CD14-positive monocyte (primary cell): ENCODE measurements at regions of chr15 and their contacts with region 1.

Region 1: DNA sequence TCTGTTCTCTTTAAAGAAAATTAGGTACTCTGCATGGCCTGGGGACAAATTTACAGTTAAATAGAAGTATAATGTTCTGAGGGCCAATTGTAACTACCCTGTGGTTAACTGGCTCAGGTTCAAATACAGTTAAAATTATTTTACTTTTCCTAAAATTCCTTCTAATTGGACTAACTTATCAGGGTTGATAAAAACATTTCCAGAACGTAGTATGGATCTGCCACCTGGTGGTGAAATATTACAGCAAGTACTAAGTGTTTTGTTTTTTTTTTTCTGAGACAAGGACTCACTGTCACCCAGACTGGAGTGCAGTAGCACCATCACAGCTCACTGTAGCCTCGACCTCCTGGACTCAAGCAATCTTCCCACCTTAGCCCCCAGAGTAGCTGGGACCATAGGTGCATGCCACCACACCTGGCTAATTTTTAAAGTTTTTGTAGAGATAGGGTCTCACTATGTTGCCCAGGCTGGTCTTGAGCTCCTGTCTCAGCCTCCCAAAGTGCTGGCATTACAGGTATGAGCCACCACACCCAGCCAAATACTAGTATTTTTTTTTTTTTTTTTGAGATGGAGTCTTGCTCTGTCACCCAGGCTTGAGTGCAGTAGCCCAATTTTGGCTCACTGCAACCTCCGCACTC is 29.2 kb downstream of the NEO1 start:
- DNase-seq: peak in 2 of 3 donors; percentile 5 to 28
- H3K4me3 ChIP-seq: no peak overlapping the region
- H3K4me3 Mint-ChIP-seq: no peak overlapping the region
- H3K27ac ChIP-seq: no peak overlapping the region
- H3K27ac Mint-ChIP-seq: no peak overlapping the region
- H3K4me1 ChIP-seq: no peaks in the 10 kb centered on the region
- H3K4me1 Mint-ChIP-seq: no peaks in the 10 kb centered on the region
- H3K27me3 ChIP-seq: peaks cover 6 to 11% of the 10 kb centered on the region in 2 donors
- H3K27me3 Mint-ChIP-seq: peaks cover 11 to 18% (median 12%) of the 10 kb centered on the region in 3 donors
- CTCF ChIP-seq: peak; percentile 46

Region 2: DNA sequence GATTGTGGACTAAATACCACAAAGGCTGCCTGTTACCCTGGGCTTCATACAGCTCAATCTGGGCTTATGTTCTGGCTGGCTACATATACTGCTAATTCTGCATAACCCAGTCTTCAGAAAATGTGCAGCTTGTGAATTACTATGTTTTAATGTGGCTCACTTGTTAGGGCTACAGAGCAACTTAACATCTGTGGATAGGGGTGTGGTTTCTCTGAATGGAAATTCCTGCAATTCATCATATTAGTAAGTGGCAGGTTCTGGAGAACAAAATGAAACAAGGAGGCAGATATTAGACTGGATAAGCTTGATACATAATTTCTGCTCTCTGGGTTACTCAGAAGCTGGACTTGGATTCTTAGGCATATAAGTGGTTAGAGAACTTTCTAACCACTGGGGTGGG is 676.6 kb before region 1 on chr15:
- intact Hi-C with region 1: no loop called
- DNase-seq: no peak
- H3K4me3 ChIP-seq: no peak overlapping the region
- H3K4me3 Mint-ChIP-seq: no peak overlapping the region
- H3K27ac ChIP-seq: no peak overlapping the region
- H3K27ac Mint-ChIP-seq: no peak overlapping the region
- H3K4me1 ChIP-seq: no peaks in the 10 kb centered on the region
- H3K4me1 Mint-ChIP-seq: peaks cover 6% of the 10 kb centered on the region
- H3K27me3 ChIP-seq: peaks cover 2 to 3% of the 10 kb centered on the region in 2 donors
- H3K27me3 Mint-ChIP-seq: peaks cover 6 to 15% (median 9%) of the 10 kb centered on the region in 3 donors
- CTCF ChIP-seq: no peak

Region 3: GRCh38 chr15:72722071-72722696 is 359.3 kb before region 1 on chr15:
- intact Hi-C with region 1: loop called in 1 of 2 experiments (anchors 10 kb)
- DNase-seq: peak; percentile 47 to 62 (median 56)
- H3K4me3 ChIP-seq: no peak overlapping the region
- H3K4me3 Mint-ChIP-seq: no peak overlapping the region
- H3K27ac ChIP-seq: no peak overlapping the region
- H3K27ac Mint-ChIP-seq: no peak overlapping the region
- H3K4me1 ChIP-seq: no peaks in the 10 kb centered on the region
- H3K4me1 Mint-ChIP-seq: no peaks in the 10 kb centered on the region
- H3K27me3 ChIP-seq: no peaks in the 10 kb centered on the region
- H3K27me3 Mint-ChIP-seq: peaks cover 0 to 4% (median 2%) of the 10 kb centered on the region in 3 donors
- CTCF ChIP-seq: peak; percentile 92

Region 4: DNA sequence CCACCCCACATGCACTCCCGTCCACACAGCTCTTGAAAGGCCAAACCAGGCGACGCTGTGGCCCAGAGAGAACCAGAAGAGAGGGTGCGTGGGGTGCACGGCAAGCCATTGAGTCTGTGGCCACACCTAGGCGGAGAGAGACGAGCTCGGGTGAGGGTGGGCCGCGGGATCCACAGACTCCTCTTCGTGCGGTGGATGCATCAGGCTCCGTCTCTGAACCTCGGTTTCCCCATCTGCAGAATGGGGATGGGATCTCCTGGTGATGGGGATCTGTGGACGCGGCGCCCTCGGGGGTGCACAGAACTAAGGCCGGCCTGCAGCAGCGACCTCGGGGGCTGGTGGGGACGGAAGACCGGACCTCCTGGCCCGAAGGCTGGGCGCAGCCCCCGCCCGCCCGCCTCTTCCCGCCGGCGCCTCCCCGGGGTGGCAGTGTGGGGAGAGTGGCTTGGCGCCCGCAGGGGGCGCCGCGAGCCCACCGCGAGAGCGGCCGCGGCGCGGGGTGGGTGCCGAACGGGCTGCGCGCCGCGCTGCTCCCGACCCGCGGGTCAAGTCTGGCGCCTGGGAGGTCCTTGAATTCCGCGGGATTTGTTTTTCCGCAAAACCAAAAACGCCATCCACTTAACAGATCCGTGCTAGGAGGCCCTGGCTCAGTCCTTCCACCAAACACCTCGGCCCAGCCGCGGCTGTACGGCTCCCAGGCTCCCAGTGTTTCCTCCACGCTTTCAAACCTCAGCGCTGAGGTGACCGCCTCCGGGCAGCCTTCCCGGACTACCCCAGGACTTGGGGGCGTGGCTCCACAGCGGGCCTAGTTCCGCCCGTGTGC is 284.7 kb before region 1 on chr15:
- intact Hi-C with region 1: loop called in 1 of 2 experiments (anchors 10 kb)
- DNase-seq: peak; percentile 16 to 41 (median 25)
- H3K4me3 ChIP-seq: peak overlapping the region; percentile 18 to 73 (median 40)
- H3K4me3 Mint-ChIP-seq: peak overlapping the region; percentile 74 to 93
- H3K27ac ChIP-seq: no peak overlapping the region
- H3K27ac Mint-ChIP-seq: peak overlapping the region in 2 of 7 donors; percentile 38 to 66
- H3K4me1 ChIP-seq: peaks cover 9 to 13% of the 10 kb centered on the region in 2 donors
- H3K4me1 Mint-ChIP-seq: peaks cover 12% of the 10 kb centered on the region
- H3K27me3 ChIP-seq: peaks cover 41 to 65% of the 10 kb centered on the region in 2 donors
- H3K27me3 Mint-ChIP-seq: peaks cover 40 to 76% (median 44%) of the 10 kb centered on the region in 3 donors
- CTCF ChIP-seq: peak; percentile 35